Activated CD4-positive, alpha-beta T cell treated with anti-CD3 and anti-CD28 coated beads for 36 hours (primary cell): ENCODE measurements at regions of chr11 and their contacts with region 1.

Region 1: DNA sequence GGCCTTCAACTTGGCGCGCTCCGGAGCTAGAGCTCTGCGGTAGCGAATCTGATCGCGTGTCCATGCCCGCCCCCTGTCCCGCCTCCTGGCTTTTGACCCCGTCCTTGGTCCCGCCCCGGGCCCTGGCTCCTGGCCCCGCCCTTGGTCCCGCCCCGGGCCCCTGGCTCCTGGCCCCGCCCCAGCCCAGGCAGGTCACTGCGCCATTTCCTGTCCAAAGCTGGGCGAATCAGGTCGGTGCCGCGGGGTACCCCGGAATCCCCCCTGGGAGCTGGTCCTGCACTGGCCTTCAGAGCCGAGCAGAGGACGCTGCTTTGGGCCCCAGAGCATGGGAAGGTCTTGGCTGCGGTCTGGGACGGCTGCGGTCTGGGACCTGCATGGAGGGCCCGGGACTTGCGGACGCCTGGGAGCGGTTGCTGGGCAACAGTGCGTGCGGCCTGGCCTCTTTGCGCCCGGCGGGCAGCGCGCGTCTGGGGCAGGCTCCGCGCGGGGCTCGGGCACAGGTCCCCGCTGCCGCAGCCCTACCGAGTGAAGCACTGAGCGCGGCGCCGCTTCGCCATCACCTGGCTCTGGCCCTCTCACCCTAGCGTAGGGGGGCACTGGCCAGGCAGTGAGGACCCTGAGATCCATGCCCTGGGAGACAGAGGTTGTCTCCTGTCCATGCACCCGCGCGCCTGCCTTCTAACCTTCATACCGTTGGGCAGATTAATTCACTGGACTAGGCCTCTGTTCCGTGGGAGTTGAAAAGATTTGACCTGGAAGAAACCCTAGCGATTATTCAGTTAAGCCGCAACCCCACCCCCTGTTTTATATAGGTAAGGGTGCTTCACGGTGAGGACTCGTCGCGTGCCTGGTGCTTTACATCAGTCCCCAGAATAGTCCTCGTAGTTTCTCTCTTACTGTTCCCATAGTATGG is at the start of gene TTC12:
- DNase-seq: peak; percentile 97
- ATAC-seq: peak; percentile 99
- H3K4me3 Mint-ChIP-seq: peak within 1 kb of the TSS; percentile 77
- H3K27ac Mint-ChIP-seq: peak within 1 kb of the TSS; percentile 82
- H3K4me1 Mint-ChIP-seq: peaks cover 24% of the 10 kb centered on the region
- H3K27me3 Mint-ChIP-seq: no peaks in the 10 kb centered on the region
- total RNA-seq, gene TTC12: 16.3 to 17.6 TPM

Region 2: GRCh38 chr11:111766093-111766833 is 1548.4 kb before region 1 on chr11 and contains the start of gene PPP2R1B:
- CTCF ChIA-PET with region 1: no interaction called
- POLR2A ChIA-PET with region 1: no interaction called
- intact Hi-C with region 1: loop called in 1 of 2 experiments (anchors 5 kb)
- DNase-seq: peak; percentile 85
- ATAC-seq: peak; percentile 95
- H3K4me3 Mint-ChIP-seq: peak within 1 kb of the TSS; percentile 85
- H3K27ac Mint-ChIP-seq: peak within 1 kb of the TSS; percentile 98
- H3K4me1 Mint-ChIP-seq: peaks cover 32% of the 10 kb centered on the region
- H3K27me3 Mint-ChIP-seq: no peaks in the 10 kb centered on the region
- total RNA-seq, gene PPP2R1B: 39.1 to 53.9 TPM

Region 3: DNA sequence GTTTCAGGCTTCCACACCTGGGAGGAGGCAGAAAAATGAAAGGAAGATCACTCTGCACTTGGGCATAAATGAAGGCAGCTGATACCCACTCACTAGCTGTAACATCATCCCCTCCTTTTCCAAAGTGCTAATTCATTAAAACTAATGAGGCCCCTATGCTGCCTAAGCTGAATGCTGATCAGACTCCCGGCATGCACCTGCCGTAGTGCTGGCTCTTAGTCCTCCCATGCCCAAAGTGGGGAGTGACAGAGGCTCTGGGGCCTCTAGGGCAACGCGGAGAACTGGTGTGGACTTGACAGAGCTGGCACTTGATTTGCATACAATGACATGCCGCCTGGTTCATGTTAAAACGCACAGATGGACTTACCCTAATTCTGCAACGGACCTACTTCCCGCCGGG is 450.0 kb before region 1 on chr11:
- CTCF ChIA-PET with region 1: no interaction called
- POLR2A ChIA-PET with region 1: no interaction called
- intact Hi-C with region 1: no loop called
- DNase-seq: no peak
- ATAC-seq: no peak
- H3K4me3 Mint-ChIP-seq: no peak overlapping the region
- H3K27ac Mint-ChIP-seq: no peak overlapping the region
- H3K4me1 Mint-ChIP-seq: no peaks in the 10 kb centered on the region
- H3K27me3 Mint-ChIP-seq: peaks cover 4% of the 10 kb centered on the region

Region 4: DNA sequence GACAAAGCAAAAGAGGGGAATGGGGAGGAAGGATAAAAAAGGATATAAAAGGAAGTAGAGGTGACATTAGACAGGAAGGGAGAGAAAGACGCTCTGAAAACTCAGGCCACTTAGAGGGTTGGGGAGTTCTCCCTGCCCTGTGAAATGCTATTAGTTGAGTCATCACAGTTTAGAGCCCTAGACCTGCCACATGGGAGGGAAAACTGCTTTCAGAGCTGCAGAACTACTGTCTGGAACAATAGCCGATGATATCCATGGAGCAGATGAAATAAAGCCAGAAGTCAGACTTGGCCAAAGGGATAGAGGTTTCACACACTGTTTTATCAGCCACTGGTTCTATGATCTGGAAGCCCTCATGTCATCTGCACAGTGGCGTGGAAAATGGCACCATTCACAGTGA is 195.6 kb before region 1 on chr11:
- CTCF ChIA-PET with region 1: no interaction called
- POLR2A ChIA-PET with region 1: no interaction called
- intact Hi-C with region 1: no loop called
- DNase-seq: no peak
- ATAC-seq: no peak
- H3K4me3 Mint-ChIP-seq: no peak overlapping the region
- H3K27ac Mint-ChIP-seq: no peak overlapping the region
- H3K4me1 Mint-ChIP-seq: no peaks in the 10 kb centered on the region
- H3K27me3 Mint-ChIP-seq: peaks cover 9% of the 10 kb centered on the region

Region 5: DNA sequence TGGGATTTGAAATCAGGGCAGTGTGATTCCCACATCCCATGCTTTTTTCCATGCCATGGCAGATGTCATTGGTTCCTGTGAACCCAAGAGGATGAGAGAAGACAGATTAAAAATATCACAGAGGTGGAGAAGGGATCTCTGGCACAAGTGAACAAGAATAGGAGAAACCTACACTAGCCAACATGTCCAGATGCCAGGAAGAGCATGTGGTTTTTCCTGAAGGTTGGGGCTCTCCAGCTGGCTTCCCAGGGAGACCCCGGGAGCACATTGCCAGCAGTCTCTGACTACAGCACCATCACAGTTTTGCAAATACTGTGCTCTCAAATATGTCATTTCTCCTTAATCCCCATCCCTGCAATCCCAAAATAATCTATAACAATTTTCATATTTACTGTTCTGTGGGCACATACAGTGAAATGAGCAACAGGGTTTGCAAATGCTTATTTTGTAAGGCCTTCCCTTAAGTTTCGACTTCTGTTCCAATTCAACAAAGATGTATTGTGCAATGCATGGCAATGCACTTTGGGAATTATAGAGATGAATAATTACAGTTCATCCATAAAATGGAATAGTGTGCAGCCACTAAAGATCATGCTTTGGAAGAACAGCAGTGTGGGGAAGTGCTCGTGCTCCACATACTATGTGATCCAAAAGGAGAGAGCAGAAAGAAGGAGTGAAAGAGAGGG is 77.7 kb after region 1 on chr11:
- CTCF ChIA-PET with region 1: no interaction called
- POLR2A ChIA-PET with region 1: no interaction called
- intact Hi-C with region 1: no loop called
- DNase-seq: no peak
- ATAC-seq: no peak
- H3K4me3 Mint-ChIP-seq: no peak overlapping the region
- H3K27ac Mint-ChIP-seq: no peak overlapping the region
- H3K4me1 Mint-ChIP-seq: no peaks in the 10 kb centered on the region
- H3K27me3 Mint-ChIP-seq: no peaks in the 10 kb centered on the region

Region 6: DNA sequence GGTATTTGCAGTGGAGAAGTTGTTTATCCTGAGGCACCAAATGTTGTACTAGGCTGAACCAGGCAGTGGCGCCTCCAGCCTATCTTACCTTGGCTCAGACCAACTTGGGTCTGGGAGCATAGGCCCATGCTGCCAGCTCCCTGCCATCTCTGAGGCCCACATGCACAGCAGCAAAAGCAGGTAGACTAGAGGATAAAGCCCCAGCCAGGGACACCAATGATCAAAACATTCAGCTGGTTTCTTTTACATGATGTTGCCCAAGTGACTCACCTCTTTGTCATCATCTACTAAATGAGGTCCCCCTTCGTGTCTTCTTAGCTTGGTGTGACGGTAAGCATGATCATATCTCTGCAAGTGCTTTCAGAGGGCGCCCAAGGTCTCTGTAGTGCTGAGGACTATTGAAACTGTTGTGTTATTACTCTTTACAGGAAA is 272.7 kb after region 1 on chr11:
- CTCF ChIA-PET with region 1: no interaction called
- POLR2A ChIA-PET with region 1: no interaction called
- intact Hi-C with region 1: loop called in 1 of 2 experiments (anchors 1 kb)
- DNase-seq: peak; percentile 76
- ATAC-seq: peak; percentile 99
- H3K4me3 Mint-ChIP-seq: no peak overlapping the region
- H3K27ac Mint-ChIP-seq: peak overlapping the region; percentile 82
- H3K4me1 Mint-ChIP-seq: peaks cover 15% of the 10 kb centered on the region
- H3K27me3 Mint-ChIP-seq: peaks cover 8% of the 10 kb centered on the region